Activated CD4-positive, alpha-beta memory T cell treated with anti-CD3 and anti-CD28 coated beads, Interleukin-2, amount 10 ng/mL, durations not matched to agents 7 days and 5 days (primary cell): ENCODE measurements at regions of chr5 and their contacts with region 1.

Region 1: DNA sequence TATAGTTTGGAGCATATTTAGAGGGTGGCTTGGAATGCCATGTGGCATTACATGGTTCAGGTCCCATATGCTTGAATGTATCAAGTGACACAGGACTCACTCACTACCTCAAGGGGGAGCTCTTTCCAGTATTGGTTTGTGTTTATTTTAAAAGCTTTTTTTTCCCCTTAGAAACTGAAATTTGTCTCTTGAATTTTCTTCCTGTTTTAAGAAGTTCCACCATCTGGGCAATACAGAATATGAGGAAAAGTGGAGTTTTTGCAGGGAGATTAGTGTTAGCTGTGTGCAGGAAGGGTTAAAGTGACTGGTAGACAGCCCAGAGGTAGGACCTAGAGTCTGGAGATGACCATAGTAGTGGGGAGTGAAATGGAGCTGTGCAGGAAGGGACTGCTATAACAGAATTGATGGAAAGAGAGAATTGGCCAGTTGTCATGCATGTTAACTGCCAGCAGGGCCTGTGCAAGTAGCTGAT is 36.6 kb downstream of the CTNNA1 start:
- DNase-seq: no peak
- H3K4me3 Mint-ChIP-seq: no peak overlapping the region
- H3K27ac Mint-ChIP-seq: no peak overlapping the region
- H3K4me1 Mint-ChIP-seq: peaks cover 11% of the 10 kb centered on the region
- H3K27me3 Mint-ChIP-seq: peaks cover 4% of the 10 kb centered on the region

Region 2: GRCh38 chr5:138772986-138773594 is 16.7 kb before region 1 on chr5:
- CTCF ChIA-PET with region 1: interaction called, 18 read pairs
- POLR2A ChIA-PET with region 1: no interaction called
- DNase-seq: no peak
- H3K4me3 Mint-ChIP-seq: no peak overlapping the region
- H3K27ac Mint-ChIP-seq: no peak overlapping the region
- H3K4me1 Mint-ChIP-seq: no peaks in the 10 kb centered on the region
- H3K27me3 Mint-ChIP-seq: no peaks in the 10 kb centered on the region

Region 3: DNA sequence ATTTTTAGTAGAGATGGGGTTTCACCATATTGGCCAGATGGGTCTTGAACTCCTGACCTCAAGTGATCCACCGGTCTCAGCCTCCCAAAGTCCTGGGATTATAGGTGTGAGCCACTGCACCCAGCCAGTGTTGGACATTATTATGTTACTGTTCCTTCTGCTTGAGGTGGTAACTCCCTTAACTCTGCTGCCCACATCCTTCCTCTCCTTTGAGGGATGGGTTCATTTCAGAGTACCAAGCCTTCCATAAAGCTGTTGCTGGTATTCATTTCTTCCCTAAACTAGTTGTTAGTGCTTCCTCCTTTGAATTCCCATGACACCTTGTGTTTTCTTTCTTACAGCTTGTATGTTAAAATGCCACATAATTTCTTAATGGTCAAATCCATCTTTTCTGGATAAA is 17.4 kb after region 1 on chr5:
- CTCF ChIA-PET with region 1: interaction called, 12 read pairs
- POLR2A ChIA-PET with region 1: no interaction called
- DNase-seq: no peak
- H3K4me3 Mint-ChIP-seq: no peak overlapping the region
- H3K27ac Mint-ChIP-seq: no peak overlapping the region
- H3K4me1 Mint-ChIP-seq: peaks cover 9% of the 10 kb centered on the region
- H3K27me3 Mint-ChIP-seq: no peaks in the 10 kb centered on the region

Region 4: GRCh38 chr5:138824924-138825863 is 35.4 kb after region 1 on chr5:
- CTCF ChIA-PET with region 1: interaction called, 11 read pairs
- POLR2A ChIA-PET with region 1: no interaction called
- DNase-seq: no peak
- H3K4me3 Mint-ChIP-seq: no peak overlapping the region
- H3K27ac Mint-ChIP-seq: no peak overlapping the region
- H3K4me1 Mint-ChIP-seq: peaks cover 4% of the 10 kb centered on the region
- H3K27me3 Mint-ChIP-seq: no peaks in the 10 kb centered on the region

Region 5: DNA sequence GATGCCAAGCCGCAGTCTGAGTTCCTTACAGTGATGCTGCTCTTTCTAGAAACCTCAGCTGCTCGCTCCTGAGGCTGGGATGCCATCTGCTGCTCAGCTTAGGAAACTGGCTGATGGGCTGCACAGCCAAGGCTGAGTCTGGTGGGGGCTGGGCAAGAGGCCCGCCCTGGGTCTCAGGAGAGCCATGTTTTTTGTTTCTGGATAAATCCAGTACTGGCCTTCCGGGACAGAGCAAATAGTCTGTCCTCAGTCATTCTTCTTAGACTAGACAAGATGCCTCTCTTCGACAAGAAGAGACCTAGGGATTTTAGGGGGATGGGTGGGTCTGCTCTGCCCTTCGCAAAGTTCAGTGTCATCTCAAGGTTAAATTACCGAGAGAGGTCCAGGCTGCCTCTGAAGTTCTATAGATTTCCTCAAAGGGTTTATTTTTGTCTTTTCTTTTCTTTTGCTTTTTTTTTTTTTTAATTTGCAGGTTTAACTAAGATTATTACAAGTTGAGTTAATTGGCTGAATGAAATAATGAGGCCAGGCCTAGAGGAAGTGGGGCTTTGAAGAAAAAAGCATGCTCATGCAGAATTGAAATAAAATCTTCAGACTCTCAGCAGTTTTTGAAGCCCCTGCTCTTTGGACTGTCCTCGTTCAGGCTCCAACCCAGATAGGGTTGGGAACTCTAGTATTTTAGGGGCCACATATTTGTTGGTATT is 473.1 kb after region 1 on chr5:
- CTCF ChIA-PET with region 1: interaction called, 12 read pairs
- POLR2A ChIA-PET with region 1: no interaction called
- DNase-seq: peak; percentile 72
- H3K4me3 Mint-ChIP-seq: no peak overlapping the region
- H3K27ac Mint-ChIP-seq: no peak overlapping the region
- H3K4me1 Mint-ChIP-seq: peaks cover 7% of the 10 kb centered on the region
- H3K27me3 Mint-ChIP-seq: peaks cover 21% of the 10 kb centered on the region